PC-9 (cell line): ENCODE measurements at regions of chr11 and their contacts with region 1.

Region 1: GRCh38 chr11:110376711-110377324 is 52.9 kb upstream of the FDX1 start:
- DNase-seq: peak; percentile 68 to 72
- H3K4me3 ChIP-seq: no peak overlapping the region
- H3K27ac ChIP-seq: no peak overlapping the region
- H3K4me1 ChIP-seq: peaks cover 25% of the 10 kb centered on the region
- H3K27me3 ChIP-seq: no peaks in the 10 kb centered on the region
- CTCF ChIP-seq: peak; percentile 94

Region 2: DNA sequence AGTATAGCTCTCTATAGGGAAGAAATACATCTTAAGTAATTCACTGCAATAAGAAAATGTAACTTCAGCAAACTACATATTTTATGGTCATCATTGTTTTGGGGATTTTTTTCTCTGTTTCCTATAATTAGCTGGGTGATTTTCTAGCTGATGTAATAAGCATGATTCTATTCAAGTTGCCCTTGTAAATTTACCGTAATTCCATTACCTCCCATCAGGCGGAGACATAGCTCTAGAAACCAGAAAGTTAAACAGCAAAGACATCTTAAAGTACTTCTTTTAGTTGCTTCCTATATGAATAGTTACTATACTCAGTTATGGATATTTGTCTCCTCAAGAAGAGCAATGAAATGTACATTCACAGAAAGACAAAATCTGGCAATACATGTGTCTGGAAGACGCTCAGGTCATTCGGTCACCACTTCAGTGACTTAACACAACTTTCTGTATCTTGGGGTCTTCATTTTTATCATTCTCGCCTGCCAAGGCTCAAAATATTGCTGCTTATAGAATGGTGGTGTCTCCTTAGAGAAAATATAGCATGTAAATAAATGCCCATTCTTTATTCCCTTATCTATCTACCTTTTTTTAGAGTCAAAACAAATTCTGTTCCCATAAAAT is 523.6 kb before region 1 on chr11:
- CTCF ChIA-PET with region 1: no interaction called
- POLR2A ChIA-PET with region 1: no interaction called
- intact Hi-C with region 1: loop called (anchors 1 kb)
- DNase-seq: peak; percentile 21 to 66
- H3K4me3 ChIP-seq: no peak overlapping the region
- H3K27ac ChIP-seq: no peak overlapping the region
- H3K4me1 ChIP-seq: no peaks in the 10 kb centered on the region
- H3K27me3 ChIP-seq: no peaks in the 10 kb centered on the region
- CTCF ChIP-seq: peak; percentile 88

Region 3: DNA sequence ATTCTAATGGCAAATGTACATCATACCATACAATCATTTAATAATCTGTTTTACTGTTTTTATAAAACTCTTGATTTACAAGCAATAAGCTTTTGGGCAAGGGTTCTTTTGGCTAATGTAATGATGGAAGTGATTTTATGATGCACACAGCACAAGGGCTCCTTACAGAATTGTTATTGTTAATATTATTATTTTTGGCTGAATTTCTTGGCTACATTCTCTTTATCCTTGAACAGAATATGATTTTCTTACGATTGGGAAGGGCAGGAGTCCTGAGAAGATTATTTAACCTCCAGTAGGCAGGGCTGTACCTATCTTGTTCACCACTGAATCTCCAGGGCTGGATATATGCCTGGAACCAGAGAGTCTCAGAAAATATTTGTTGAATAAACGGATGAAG is 405.8 kb after region 1 on chr11:
- CTCF ChIA-PET with region 1: no interaction called
- POLR2A ChIA-PET with region 1: no interaction called
- intact Hi-C with region 1: no loop called
- DNase-seq: no peak
- H3K4me3 ChIP-seq: no peak overlapping the region
- H3K27ac ChIP-seq: no peak overlapping the region
- H3K4me1 ChIP-seq: no peaks in the 10 kb centered on the region
- H3K27me3 ChIP-seq: no peaks in the 10 kb centered on the region
- CTCF ChIP-seq: no peak